ENCODE measurements at regions of chr2 and their contacts with region 1.

Region 1: GRCh38 chr2:72993147-72993932 is 76.0 kb downstream of the EMX1 start:
- DNase-seq: peak; percentile 45
- H3K4me3 ChIP-seq: no peak overlapping the region
- H3K27ac ChIP-seq: no peak overlapping the region
- H3K4me1 ChIP-seq: no peaks in the 10 kb centered on the region
- H3K27me3 ChIP-seq: no peaks in the 10 kb centered on the region
- CTCF ChIP-seq: peak; percentile 77

Region 2: DNA sequence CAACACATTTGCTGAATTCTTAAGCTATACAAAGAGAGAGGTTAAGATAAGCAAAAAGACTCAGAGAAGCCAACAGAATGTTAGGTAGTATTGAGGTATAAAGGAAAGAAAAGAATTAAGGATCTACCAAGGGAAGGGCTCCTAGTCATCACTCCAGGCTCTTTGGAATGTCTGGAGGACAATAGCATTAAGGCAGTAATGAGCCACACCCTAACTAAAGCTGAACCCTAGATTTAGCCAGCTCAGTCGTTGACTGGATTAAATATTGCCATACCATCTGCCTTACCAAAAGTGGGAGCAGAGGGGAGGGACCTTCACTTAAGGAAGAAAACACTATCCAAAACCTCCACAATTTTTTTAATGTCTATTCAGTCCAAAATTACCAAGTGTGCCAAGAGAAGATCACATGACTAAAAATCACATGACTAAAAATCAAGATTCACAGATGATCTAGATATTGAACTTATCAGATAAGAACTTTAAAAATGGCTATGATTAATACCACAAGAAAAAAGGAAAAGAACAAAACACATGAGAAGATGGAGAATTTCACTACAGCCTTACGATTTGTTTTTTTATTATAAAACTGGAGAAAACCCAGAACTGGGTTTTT is 227.2 kb before region 1 on chr2:
- CTCF ChIA-PET with region 1: no interaction called
- POLR2A ChIA-PET with region 1: no interaction called
- intact Hi-C with region 1: no loop called
- DNase-seq: no peak
- H3K4me3 ChIP-seq: no peak overlapping the region
- H3K27ac ChIP-seq: no peak overlapping the region
- H3K4me1 ChIP-seq: no peaks in the 10 kb centered on the region
- H3K27me3 ChIP-seq: no peaks in the 10 kb centered on the region
- CTCF ChIP-seq: no peak

Region 3: GRCh38 chr2:73071360-73072133 is 78.2 kb after region 1 on chr2 and contains the start of gene SFXN5:
- CTCF ChIA-PET with region 1: no interaction called
- POLR2A ChIA-PET with region 1: no interaction called
- intact Hi-C with region 1: loop called (anchors 2 kb)
- DNase-seq: peak; percentile 94
- H3K4me3 ChIP-seq: peak within 1 kb of the TSS; percentile 78
- H3K27ac ChIP-seq: peak within 1 kb of the TSS; percentile 94
- H3K4me1 ChIP-seq: no peaks in the 10 kb centered on the region
- H3K27me3 ChIP-seq: no peaks in the 10 kb centered on the region
- CTCF ChIP-seq: no peak; the same call in 1 of the 2 replicates
- total RNA-seq, gene SFXN5: 23.1 and 23.3 TPM in 2 replicates

Region 4: DNA sequence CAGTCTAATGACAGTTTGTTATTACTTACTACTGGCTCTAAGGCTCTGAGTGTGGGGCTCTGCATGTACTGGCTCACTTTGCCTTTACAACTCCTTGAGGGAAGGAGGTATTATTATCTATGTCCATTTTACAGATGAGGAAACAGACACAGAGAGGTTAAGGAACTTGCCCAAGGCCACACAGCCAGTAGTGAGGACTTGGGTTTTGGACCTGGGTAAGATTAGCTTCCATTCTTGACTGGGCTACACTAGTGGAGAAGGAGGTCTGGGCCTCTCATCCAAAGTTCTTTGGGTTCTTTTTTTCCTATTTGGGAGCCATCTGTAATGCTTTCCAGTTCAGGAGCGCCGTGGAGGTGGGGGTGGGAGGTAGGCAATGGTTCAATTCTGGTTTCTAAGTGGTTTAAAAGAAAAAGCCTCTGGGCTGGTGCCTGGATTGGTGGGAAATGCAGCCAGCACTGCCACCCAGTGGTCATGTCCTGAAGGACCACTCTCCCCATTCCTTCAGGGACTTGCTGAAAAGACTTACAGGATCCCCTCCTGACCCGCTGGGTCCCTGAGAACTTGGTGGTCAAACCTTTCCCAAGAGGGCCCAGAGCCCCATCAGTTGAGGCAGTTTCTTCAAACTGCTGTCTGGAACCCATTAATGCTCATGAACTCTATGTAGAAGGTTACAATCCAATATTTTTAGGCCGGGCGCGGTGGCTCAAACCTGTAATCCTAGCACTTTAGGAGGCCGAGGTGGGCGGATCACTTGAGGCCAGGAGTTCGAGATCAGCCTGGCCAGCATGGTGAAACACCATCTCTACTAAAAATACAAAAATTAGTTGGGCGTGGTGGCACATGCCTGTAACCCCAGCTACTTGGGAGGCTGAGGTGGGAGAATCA is 170.4 kb after region 1 on chr2:
- CTCF ChIA-PET with region 1: no interaction called
- POLR2A ChIA-PET with region 1: no interaction called
- intact Hi-C with region 1: loop called (anchors 2 kb)
- DNase-seq: peak; percentile 79
- H3K4me3 ChIP-seq: no peak overlapping the region
- H3K27ac ChIP-seq: no peak overlapping the region
- H3K4me1 ChIP-seq: no peaks in the 10 kb centered on the region
- H3K27me3 ChIP-seq: no peaks in the 10 kb centered on the region
- CTCF ChIP-seq: peak; percentile 88

Region 5: GRCh38 chr2:73176881-73177644 is 183.7 kb after region 1 on chr2:
- CTCF ChIA-PET with region 1: interaction called, 4 read pairs
- POLR2A ChIA-PET with region 1: no interaction called
- intact Hi-C with region 1: loop called (anchors 1 kb)
- DNase-seq: peak; percentile 95
- H3K4me3 ChIP-seq: peak overlapping the region; percentile 36
- H3K27ac ChIP-seq: no peak overlapping the region
- H3K4me1 ChIP-seq: peaks cover 18% of the 10 kb centered on the region
- H3K27me3 ChIP-seq: no peaks in the 10 kb centered on the region
- CTCF ChIP-seq: peak; percentile 99

Region 6: DNA sequence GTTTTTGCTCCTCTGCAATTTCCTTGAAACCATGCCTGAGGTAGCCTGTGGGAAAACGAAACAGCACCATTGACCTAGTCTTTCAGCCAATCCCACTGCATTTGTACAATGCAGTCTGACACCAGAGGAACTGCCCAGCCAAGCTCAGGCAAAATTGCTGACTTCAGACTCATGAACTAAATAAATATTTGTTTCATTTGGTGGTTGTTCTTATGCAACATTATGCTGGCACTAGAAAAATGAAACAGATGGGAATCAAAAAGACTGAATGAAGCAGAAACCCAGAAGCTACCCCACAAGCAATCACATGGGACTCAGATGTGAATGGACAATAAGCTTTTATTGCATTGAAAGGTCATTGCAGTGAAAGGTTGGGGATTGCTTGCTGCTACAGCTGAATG is 647.2 kb after region 1 on chr2:
- CTCF ChIA-PET with region 1: no interaction called
- POLR2A ChIA-PET with region 1: no interaction called
- intact Hi-C with region 1: no loop called
- DNase-seq: no peak
- H3K4me3 ChIP-seq: no peak overlapping the region
- H3K27ac ChIP-seq: no peak overlapping the region
- H3K4me1 ChIP-seq: no peaks in the 10 kb centered on the region
- H3K27me3 ChIP-seq: peaks cover 6% of the 10 kb centered on the region
- CTCF ChIP-seq: no peak

Region 7: DNA sequence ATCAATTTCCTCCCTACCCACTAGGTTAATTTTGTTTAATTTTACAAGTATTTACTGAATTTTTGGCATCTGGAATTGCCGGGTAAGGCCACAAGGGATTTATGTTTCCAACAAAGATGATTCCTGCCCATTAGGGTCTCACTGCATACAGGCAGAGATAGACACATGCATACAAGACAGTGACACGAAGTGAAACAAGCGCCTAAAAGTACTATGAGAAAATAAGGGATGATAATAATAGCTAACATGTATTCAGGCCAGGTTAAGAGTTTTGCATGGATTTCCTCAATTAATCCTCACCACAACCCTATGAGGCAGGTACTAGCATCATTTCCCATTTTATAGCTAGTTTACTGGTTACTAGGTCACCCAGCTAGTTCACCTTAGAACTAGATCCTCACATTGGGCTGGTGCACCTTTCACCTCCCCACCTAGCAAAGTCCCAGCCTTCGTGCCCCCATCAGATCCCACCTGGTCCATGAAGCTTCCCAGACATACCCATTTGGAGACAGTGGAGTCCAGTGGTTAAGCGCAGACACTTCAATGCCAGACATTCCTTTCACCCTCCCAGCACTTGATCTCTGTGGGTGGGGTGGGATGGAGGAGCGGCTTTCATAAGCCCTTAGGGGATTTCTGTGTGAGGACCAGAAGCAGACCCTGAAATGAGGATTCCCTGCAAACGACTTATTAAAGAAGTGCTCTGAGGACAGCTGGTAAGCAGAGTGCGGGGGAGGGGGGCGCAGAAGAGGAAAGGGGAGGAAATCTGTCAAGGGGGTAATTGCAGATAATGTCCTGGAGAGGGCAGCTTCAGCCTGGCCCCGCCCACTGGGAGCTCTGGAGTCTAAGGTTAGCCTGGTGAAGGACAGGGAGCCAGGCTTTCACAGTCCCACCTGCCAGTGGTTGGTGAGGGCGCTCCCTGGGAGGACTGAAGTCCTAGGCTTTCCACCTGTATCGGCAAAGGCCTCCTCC is 927.5 kb after region 1 on chr2:
- CTCF ChIA-PET with region 1: no interaction called
- POLR2A ChIA-PET with region 1: no interaction called
- intact Hi-C with region 1: no loop called
- DNase-seq: peak; percentile 50
- H3K4me3 ChIP-seq: no peak overlapping the region
- H3K27ac ChIP-seq: no peak overlapping the region
- H3K4me1 ChIP-seq: no peaks in the 10 kb centered on the region
- H3K27me3 ChIP-seq: no peaks in the 10 kb centered on the region
- CTCF ChIP-seq: peak; percentile 21; the same call in 1 of the 2 replicates

Measured in A673 (cell line).